ENCODE measurements at regions of chr1 and their contacts with region 1.

Region 1: GRCh38 chr1:37323486-37324377 is 150.6 kb upstream of the ZC3H12A start:
- DNase-seq: peak; percentile 44 to 87
- H3K4me3 ChIP-seq: no peak overlapping the region
- H3K27ac ChIP-seq: no peak overlapping the region
- H3K4me1 ChIP-seq: peaks cover 0 to 5% (median 1%) of the 10 kb centered on the region in 4 experiments; a peak in 3 of 7 replicates
- H3K27me3 ChIP-seq: no peaks in the 10 kb centered on the region; a peak in 1 of 7 replicates
- CTCF ChIP-seq: peak; percentile 67 to 85 (median 76)
- EP300 ChIP-seq: no peak
- POLR2A ChIP-seq: no peak
- RAD21 ChIP-seq: peak; percentile 92 to 94

Region 2: DNA sequence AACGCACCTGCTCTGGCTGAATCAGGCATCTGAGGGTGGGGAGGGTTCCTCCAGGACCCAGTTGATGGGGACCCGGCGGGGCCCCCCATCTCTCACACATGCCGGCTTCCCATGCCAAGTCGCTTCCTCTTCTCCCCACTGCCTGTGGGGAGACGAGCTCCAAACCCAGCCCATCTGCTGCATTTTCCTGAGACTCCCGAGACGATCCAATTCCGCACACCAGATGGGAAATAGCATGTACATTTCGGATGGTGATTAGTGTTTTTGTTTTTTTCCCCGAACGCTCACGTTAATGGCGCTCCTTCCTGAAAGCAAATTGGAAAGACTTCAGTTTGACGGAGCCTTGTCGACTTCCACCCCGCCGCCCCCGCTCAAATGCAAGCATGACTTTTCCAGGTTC is 276.2 kb before region 1 on chr1:
- CTCF ChIA-PET with region 1: no interaction called
- POLR2A ChIA-PET with region 1: no interaction called
- DNase-seq: no peak
- H3K4me3 ChIP-seq: no peak overlapping the region
- H3K27ac ChIP-seq: no peak overlapping the region
- H3K4me1 ChIP-seq: peaks cover 8 to 16% (median 14%) of the 10 kb centered on the region in 4 experiments
- H3K27me3 ChIP-seq: no peaks in the 10 kb centered on the region; a peak in 1 of 7 replicates
- CTCF ChIP-seq: no peak
- EP300 ChIP-seq: no peak
- POLR2A ChIP-seq: no peak
- RAD21 ChIP-seq: no peak

Region 3: GRCh38 chr1:37177247-37177864 is 146.4 kb before region 1 on chr1:
- CTCF ChIA-PET with region 1: interaction called, 23 read pairs
- POLR2A ChIA-PET with region 1: interaction called, 3 read pairs
- DNase-seq: peak; percentile 47 to 79
- H3K4me3 ChIP-seq: no peak overlapping the region
- H3K27ac ChIP-seq: no peak overlapping the region
- H3K4me1 ChIP-seq: peaks cover 0 to 5% (median under 1%) of the 10 kb centered on the region in 4 experiments; a peak in 3 of 7 replicates
- H3K27me3 ChIP-seq: no peaks in the 10 kb centered on the region
- CTCF ChIP-seq: peak; percentile 81 to 89 (median 87)
- EP300 ChIP-seq: no peak
- POLR2A ChIP-seq: no peak
- RAD21 ChIP-seq: peak; percentile 65 to 79

Region 4: GRCh38 chr1:37255136-37255795 is 68.5 kb before region 1 on chr1:
- CTCF ChIA-PET with region 1: interaction called, 20 read pairs
- POLR2A ChIA-PET with region 1: interaction called, 6 read pairs
- DNase-seq: peak; percentile 63 to 93
- H3K4me3 ChIP-seq: peak overlapping the region in 2 of 4 experiments; percentile 0 to 42; a peak in 4 of 8 replicates
- H3K27ac ChIP-seq: no peak overlapping the region
- H3K4me1 ChIP-seq: peaks cover 0 to 13% (median 4%) of the 10 kb centered on the region in 4 experiments; a peak in 5 of 7 replicates
- H3K27me3 ChIP-seq: peaks cover 0 to 7% (median 1%) of the 10 kb centered on the region in 4 experiments; a peak in 2 of 7 replicates
- CTCF ChIP-seq: peak; percentile 45 to 61 (median 58)
- EP300 ChIP-seq: no peak
- POLR2A ChIP-seq: no peak
- RAD21 ChIP-seq: peak; percentile 62 to 77

Region 5: DNA sequence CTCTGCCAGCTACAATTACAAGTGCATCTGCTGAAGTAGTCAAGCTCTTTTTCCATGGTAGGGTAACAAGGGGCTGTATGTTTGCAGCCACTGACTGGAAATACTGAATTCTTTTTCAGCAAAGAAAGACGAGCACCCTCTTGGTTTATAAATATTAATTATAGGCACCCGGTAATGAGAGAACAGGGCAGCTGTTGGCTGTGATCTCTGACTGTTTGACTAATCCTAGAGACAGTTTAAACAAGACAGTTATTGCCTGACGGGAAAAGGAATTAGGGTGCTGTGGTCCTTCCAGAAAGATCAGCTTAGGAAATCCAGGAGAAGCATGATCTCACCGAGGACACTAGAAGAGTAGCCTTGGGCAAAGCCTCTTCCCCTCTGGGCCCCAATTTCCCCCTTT is 33.0 kb before region 1 on chr1:
- CTCF ChIA-PET with region 1: interaction called, 21 read pairs
- POLR2A ChIA-PET with region 1: no interaction called
- DNase-seq: no peak
- H3K4me3 ChIP-seq: no peak overlapping the region
- H3K27ac ChIP-seq: no peak overlapping the region
- H3K4me1 ChIP-seq: peaks cover 0 to 2% (median 1%) of the 10 kb centered on the region in 4 experiments; a peak in 3 of 7 replicates
- H3K27me3 ChIP-seq: no peaks in the 10 kb centered on the region
- CTCF ChIP-seq: no peak
- EP300 ChIP-seq: no peak
- POLR2A ChIP-seq: no peak
- RAD21 ChIP-seq: no peak

Region 6: DNA sequence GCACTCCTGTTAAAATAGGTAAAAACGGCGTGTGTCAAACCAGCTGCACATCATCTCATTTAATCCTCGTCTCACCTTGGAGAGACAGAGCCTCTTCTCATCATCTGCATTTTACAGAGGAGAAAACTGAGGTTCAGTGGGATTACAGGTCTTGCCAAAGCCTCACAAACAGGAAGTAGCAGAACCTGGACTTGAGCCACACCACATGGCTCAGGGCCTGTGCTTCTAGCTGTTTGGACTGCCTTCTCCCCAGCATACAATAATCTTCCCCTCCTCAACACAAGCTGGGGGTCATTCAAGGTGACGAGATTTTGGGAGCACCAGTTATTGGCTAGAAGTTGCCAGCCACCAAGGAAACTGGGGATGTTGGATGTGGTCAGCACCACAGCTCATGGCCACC is 17.3 kb before region 1 on chr1:
- CTCF ChIA-PET with region 1: interaction called, 33 read pairs
- POLR2A ChIA-PET with region 1: interaction called, 4 read pairs
- DNase-seq: no peak
- H3K4me3 ChIP-seq: no peak overlapping the region
- H3K27ac ChIP-seq: no peak overlapping the region
- H3K4me1 ChIP-seq: peaks cover 0 to 7% (median 2%) of the 10 kb centered on the region in 4 experiments; a peak in 3 of 7 replicates
- H3K27me3 ChIP-seq: no peaks in the 10 kb centered on the region; a peak in 1 of 7 replicates
- CTCF ChIP-seq: no peak
- EP300 ChIP-seq: no peak
- POLR2A ChIP-seq: no peak
- RAD21 ChIP-seq: no peak

Region 7: DNA sequence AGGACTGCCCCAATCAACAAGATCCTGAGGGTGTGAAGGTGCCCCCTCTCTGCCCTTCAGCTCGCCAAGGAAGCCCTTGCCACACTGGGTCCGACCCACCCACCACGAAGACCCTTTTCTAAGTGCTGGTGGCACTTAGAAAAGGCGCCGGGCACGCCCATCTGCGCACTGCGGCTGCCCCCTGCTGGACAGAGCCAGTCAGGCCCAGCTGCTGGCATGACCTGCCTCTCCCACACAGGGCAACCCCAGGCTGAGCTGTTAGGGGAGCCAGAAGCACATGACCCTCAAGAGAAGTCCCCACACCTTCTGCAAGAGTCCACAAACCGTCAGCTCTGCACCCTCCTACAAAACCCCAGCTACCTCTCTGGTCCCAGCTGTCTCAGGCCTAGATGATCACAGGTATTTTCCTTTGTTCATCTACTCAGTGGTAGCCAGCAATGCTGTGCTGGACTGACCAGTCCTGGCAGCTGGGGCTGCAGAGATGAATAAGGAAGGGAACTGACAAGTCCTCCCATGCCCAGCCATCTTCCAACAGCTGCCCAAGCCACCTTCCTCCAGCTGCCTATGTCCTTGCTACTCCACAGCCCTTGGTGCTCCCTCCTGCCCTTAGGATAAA is 110.7 kb after region 1 on chr1:
- CTCF ChIA-PET with region 1: interaction called, 15 read pairs
- POLR2A ChIA-PET with region 1: interaction called, 8 read pairs
- DNase-seq: peak; percentile 31 to 95
- H3K4me3 ChIP-seq: no peak overlapping the region
- H3K27ac ChIP-seq: no peak overlapping the region
- H3K4me1 ChIP-seq: peaks cover 0 to 17% (median 6%) of the 10 kb centered on the region in 4 experiments; a peak in 6 of 7 replicates
- H3K27me3 ChIP-seq: no peaks in the 10 kb centered on the region; a peak in 1 of 7 replicates
- CTCF ChIP-seq: peak; percentile 94 to 98 (median 97)
- EP300 ChIP-seq: no peak
- POLR2A ChIP-seq: no peak
- RAD21 ChIP-seq: peak; percentile 97

Measured in H1 (cell line).